Naive thymus-derived CD4-positive, alpha-beta T cell (primary cell): ENCODE measurements at regions of chr22 and their contacts with region 1.

Region 1: GRCh38 chr22:41285820-41286638 is at the start of gene RANGAP1:
- DNase-seq: peak; percentile 95 to 99 (median 99)
- ATAC-seq: peak; percentile 96
- H3K4me3 ChIP-seq: peak within 1 kb of the TSS; percentile 93
- H3K4me3 Mint-ChIP-seq: peak within 1 kb of the TSS; percentile 90 to 99 (median 96)
- H3K27ac ChIP-seq: peak within 1 kb of the TSS; percentile 99
- H3K27ac Mint-ChIP-seq: peak within 1 kb of the TSS; percentile 95 to 99 (median 98)
- H3K4me1 ChIP-seq: peaks cover 10 to 15% of the 10 kb centered on the region in 2 donors
- H3K4me1 Mint-ChIP-seq: peaks cover 21 to 46% (median 42%) of the 10 kb centered on the region in 7 donors
- H3K27me3 ChIP-seq: no peaks in the 10 kb centered on the region
- H3K27me3 Mint-ChIP-seq: no peaks in the 10 kb centered on the region
- total RNA-seq, gene RANGAP1: 60.7 to 122 (median 72.4) TPM

Region 2: GRCh38 chr22:39520054-39520891 is 1765.8 kb before region 1 on chr22 and contains the start of gene ATF4:
- CTCF ChIA-PET with region 1: no interaction called
- POLR2A ChIA-PET with region 1: no interaction called
- intact Hi-C with region 1: loop called in 1 of 2 experiments (anchors 10 kb)
- DNase-seq: peak; percentile 88 to 98 (median 96)
- ATAC-seq: peak; percentile 92
- H3K4me3 ChIP-seq: peak within 1 kb of the TSS; percentile 96
- H3K4me3 Mint-ChIP-seq: peak within 1 kb of the TSS; percentile 83 to 99 (median 96)
- H3K27ac ChIP-seq: peak within 1 kb of the TSS; percentile 84
- H3K27ac Mint-ChIP-seq: peak within 1 kb of the TSS; percentile 94 to 100 (median 97)
- H3K4me1 ChIP-seq: peaks cover 27 to 39% of the 10 kb centered on the region in 2 donors
- H3K4me1 Mint-ChIP-seq: peaks cover 29 to 61% (median 48%) of the 10 kb centered on the region in 7 donors
- H3K27me3 ChIP-seq: no peaks in the 10 kb centered on the region
- H3K27me3 Mint-ChIP-seq: peaks cover 0 to 4% (median 0%) of the 10 kb centered on the region in 5 donors
- total RNA-seq, gene ATF4: 235 to 293 (median 244) TPM

Region 3: GRCh38 chr22:40856513-40857308 is 429.3 kb before region 1 on chr22 and contains the starts of genes ST13 and XPNPEP3:
- CTCF ChIA-PET with region 1: no interaction called
- POLR2A ChIA-PET with region 1: interaction called, 8 read pairs
- intact Hi-C with region 1: loop called (anchors 1 kb)
- DNase-seq: peak; percentile 96 to 98 (median 97)
- ATAC-seq: peak; percentile 94
- H3K4me3 ChIP-seq: peak within 1 kb of the TSS; percentile 83
- H3K4me3 Mint-ChIP-seq: peak within 1 kb of the TSS; percentile 94 to 100 (median 98)
- H3K27ac ChIP-seq: peak within 1 kb of the TSS; percentile 97
- H3K27ac Mint-ChIP-seq: peak within 1 kb of the TSS; percentile 98 to 100 (median 100)
- H3K4me1 ChIP-seq: peaks cover 24 to 39% of the 10 kb centered on the region in 2 donors
- H3K4me1 Mint-ChIP-seq: peaks cover 25 to 72% (median 64%) of the 10 kb centered on the region in 7 donors
- H3K27me3 ChIP-seq: no peaks in the 10 kb centered on the region
- H3K27me3 Mint-ChIP-seq: peaks cover 0 to 2% (median 0%) of the 10 kb centered on the region in 5 donors
- total RNA-seq, gene ST13: 126 to 247 (median 185) TPM
- total RNA-seq, gene XPNPEP3: 14.4 to 21.8 (median 19.0) TPM

Region 4: GRCh38 chr22:41237707-41238569 is 48.1 kb before region 1 on chr22:
- CTCF ChIA-PET with region 1: no interaction called
- POLR2A ChIA-PET with region 1: interaction called, 17 read pairs
- intact Hi-C with region 1: no loop called
- DNase-seq: peak; percentile 74 to 86 (median 84)
- ATAC-seq: peak; percentile 96
- H3K4me3 ChIP-seq: peak overlapping the region; percentile 10
- H3K4me3 Mint-ChIP-seq: peak overlapping the region in 9 of 10 donors; percentile 54 to 78 (median 73)
- H3K27ac ChIP-seq: peak overlapping the region; percentile 57
- H3K27ac Mint-ChIP-seq: peak overlapping the region in 2 of 9 donors; percentile 44 to 63
- H3K4me1 ChIP-seq: peaks cover 0 to 11% of the 10 kb centered on the region in 2 donors
- H3K4me1 Mint-ChIP-seq: peaks cover 5 to 19% (median 11%) of the 10 kb centered on the region in 7 donors
- H3K27me3 ChIP-seq: no peaks in the 10 kb centered on the region
- H3K27me3 Mint-ChIP-seq: peaks cover 0 to 2% (median 0%) of the 10 kb centered on the region in 5 donors

Region 5: DNA sequence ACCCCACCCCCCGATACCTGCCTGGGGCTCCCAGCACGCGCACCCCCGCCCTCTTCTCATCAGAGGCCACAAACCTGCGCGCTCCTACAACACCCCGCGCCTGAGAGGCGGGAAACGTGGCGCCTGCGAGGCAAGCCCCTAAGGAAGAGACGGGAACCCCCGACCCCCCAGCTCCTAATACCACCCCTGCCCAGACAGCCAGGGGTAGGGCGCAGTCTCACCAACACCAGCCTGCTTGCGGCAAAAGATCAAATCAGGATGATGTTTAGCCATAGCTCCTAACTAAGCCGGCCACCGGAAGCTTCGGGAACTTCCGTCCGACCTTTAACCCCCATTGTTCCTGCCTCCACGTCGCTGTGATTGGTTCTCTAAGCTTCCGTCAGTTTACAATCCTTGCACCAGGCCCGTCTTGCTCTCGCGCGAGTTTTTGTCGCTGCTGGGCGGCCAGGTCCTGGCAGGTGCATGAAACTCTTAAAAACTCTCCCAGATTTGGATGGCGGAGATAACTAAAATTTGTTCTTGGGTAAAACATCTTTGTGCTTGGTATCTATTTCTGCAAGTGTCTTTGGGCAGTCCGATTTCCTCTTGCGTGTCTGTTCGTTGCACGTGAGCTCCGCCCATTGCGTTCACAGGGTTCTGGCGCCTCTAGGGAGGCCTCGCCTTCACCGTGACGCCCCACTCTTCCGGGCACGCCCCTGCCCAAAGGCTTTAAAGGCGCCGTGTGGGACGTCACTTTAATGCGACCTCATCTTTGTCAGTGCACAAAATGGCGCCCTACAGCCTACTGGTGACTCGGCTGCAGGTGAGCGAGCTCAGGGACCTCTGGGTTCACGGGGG is 182.6 kb after region 1 on chr22 and contains the starts of genes ACO2 and PHF5A:
- CTCF ChIA-PET with region 1: no interaction called
- POLR2A ChIA-PET with region 1: interaction called, 9 read pairs
- intact Hi-C with region 1: loop called (anchors 1 kb)
- DNase-seq: peak; percentile 93 to 99 (median 98)
- ATAC-seq: peak; percentile 96
- H3K4me3 ChIP-seq: peak within 1 kb of the TSS; percentile 76
- H3K4me3 Mint-ChIP-seq: peak within 1 kb of the TSS; percentile 88 to 94 (median 91)
- H3K27ac ChIP-seq: peak within 1 kb of the TSS; percentile 89
- H3K27ac Mint-ChIP-seq: peak within 1 kb of the TSS; percentile 98 to 100 (median 99)
- H3K4me1 ChIP-seq: peaks cover 19 to 20% of the 10 kb centered on the region in 2 donors
- H3K4me1 Mint-ChIP-seq: peaks cover 18 to 75% (median 59%) of the 10 kb centered on the region in 7 donors
- H3K27me3 ChIP-seq: no peaks in the 10 kb centered on the region
- H3K27me3 Mint-ChIP-seq: no peaks in the 10 kb centered on the region
- total RNA-seq, gene ACO2: 64.5 to 84.8 (median 70.3) TPM
- total RNA-seq, gene PHF5A: 27.8 to 63.9 (median 36.0) TPM

Region 6: GRCh38 chr22:41621099-41621910 is 335.3 kb after region 1 on chr22 and contains the start of gene XRCC6:
- CTCF ChIA-PET with region 1: no interaction called
- POLR2A ChIA-PET with region 1: no interaction called
- intact Hi-C with region 1: loop called (anchors 1 kb)
- DNase-seq: peak; percentile 97 to 100 (median 99)
- ATAC-seq: peak; percentile 97
- H3K4me3 ChIP-seq: peak within 1 kb of the TSS; percentile 99
- H3K4me3 Mint-ChIP-seq: peak within 1 kb of the TSS; percentile 93 to 99 (median 97)
- H3K27ac ChIP-seq: peak within 1 kb of the TSS; percentile 99
- H3K27ac Mint-ChIP-seq: peak within 1 kb of the TSS; percentile 95 to 100 (median 99)
- H3K4me1 ChIP-seq: peaks cover 18 to 20% of the 10 kb centered on the region in 2 donors
- H3K4me1 Mint-ChIP-seq: peaks cover 22 to 63% (median 44%) of the 10 kb centered on the region in 7 donors
- H3K27me3 ChIP-seq: no peaks in the 10 kb centered on the region
- H3K27me3 Mint-ChIP-seq: peaks cover 0 to 3% (median 0%) of the 10 kb centered on the region in 5 donors
- total RNA-seq, gene XRCC6: 139 to 270 (median 160) TPM